Activated CD4-positive, alpha-beta memory T cell treated with anti-CD3 and anti-CD28 coated beads for 36 hours (primary cell): ENCODE measurements at regions of chr1 and their contacts with region 1.

Region 1: DNA sequence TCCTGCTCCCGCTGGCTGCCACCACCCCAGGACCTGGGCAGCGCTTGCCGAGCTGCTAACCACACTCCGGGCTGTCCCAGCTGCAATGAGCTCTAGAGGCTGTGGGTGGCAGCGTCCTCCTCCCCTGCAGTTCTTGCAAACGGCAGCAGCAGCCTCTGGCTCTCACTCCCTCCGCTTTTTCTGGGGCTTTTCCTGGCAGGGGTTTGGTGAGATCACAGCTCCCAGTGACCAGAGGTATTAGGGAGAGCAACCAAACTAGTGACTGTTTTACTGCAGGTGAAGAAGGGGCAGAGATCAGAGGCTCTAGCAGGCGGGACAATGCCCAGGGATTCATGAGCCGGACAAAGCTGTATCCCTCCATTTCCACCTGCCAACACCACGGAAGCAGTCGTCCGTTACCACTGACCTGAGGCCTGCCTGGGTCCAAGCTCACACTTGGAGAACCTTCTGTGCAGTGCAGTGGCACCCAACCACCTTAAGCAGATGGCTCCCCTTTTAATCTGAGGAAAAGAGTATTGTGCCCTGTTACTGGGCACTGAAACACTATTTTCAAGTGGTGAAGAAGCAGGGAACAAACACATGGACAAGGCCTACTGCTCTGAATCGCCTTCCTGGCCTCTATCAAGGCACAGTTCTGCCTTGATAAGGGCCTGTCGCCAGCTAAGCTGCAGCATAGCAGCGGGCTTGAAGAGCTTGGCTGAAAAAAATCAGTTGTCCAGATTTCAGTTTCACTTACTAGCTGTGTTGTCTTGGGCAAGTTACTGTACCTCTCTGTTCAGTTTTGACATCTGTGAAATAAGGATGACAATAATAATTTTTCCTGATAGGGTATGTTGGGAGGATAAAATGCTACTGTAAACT is at the start of gene F5:
- DNase-seq: peak; percentile 90
- H3K4me3 Mint-ChIP-seq: peak within 1 kb of the TSS; percentile 96
- H3K27ac Mint-ChIP-seq: peak within 1 kb of the TSS; percentile 94
- H3K4me1 Mint-ChIP-seq: peaks cover 61% of the 10 kb centered on the region
- H3K27me3 Mint-ChIP-seq: no peaks in the 10 kb centered on the region
- total RNA-seq, gene F5: 50.8 to 51.1 TPM

Region 2: GRCh38 chr1:169491845-169492281 is 94.8 kb before region 1 on chr1:
- CTCF ChIA-PET with region 1: interaction called, 3 read pairs
- POLR2A ChIA-PET with region 1: interaction called, 4 read pairs
- intact Hi-C with region 1: loop called (anchors 2 kb)
- DNase-seq: peak; percentile 82
- H3K4me3 Mint-ChIP-seq: no peak overlapping the region
- H3K27ac Mint-ChIP-seq: peak overlapping the region; percentile 47
- H3K4me1 Mint-ChIP-seq: peaks cover 56% of the 10 kb centered on the region
- H3K27me3 Mint-ChIP-seq: peaks cover 3% of the 10 kb centered on the region

Region 3: GRCh38 chr1:169794530-169795416 is 208.1 kb after region 1 on chr1 and contains the start of gene METTL18:
- CTCF ChIA-PET with region 1: interaction called, 8 read pairs
- POLR2A ChIA-PET with region 1: interaction called, 6 read pairs
- intact Hi-C with region 1: loop called (anchors 5 kb)
- DNase-seq: peak; percentile 96
- H3K4me3 Mint-ChIP-seq: peak within 1 kb of the TSS; percentile 100
- H3K27ac Mint-ChIP-seq: peak within 1 kb of the TSS; percentile 99
- H3K4me1 Mint-ChIP-seq: peaks cover 44% of the 10 kb centered on the region
- H3K27me3 Mint-ChIP-seq: no peaks in the 10 kb centered on the region
- total RNA-seq, gene METTL18: 10.8 to 10.9 TPM

Region 4: GRCh38 chr1:169809370-169810095 is 222.9 kb after region 1 on chr1:
- CTCF ChIA-PET with region 1: interaction called, 18 read pairs
- POLR2A ChIA-PET with region 1: interaction called, 6 read pairs
- intact Hi-C with region 1: no loop called
- DNase-seq: no peak
- H3K4me3 Mint-ChIP-seq: no peak overlapping the region
- H3K27ac Mint-ChIP-seq: no peak overlapping the region
- H3K4me1 Mint-ChIP-seq: no peaks in the 10 kb centered on the region
- H3K27me3 Mint-ChIP-seq: no peaks in the 10 kb centered on the region